ENCODE measurements at regions of chrX and their contacts with region 1.

Region 1: DNA sequence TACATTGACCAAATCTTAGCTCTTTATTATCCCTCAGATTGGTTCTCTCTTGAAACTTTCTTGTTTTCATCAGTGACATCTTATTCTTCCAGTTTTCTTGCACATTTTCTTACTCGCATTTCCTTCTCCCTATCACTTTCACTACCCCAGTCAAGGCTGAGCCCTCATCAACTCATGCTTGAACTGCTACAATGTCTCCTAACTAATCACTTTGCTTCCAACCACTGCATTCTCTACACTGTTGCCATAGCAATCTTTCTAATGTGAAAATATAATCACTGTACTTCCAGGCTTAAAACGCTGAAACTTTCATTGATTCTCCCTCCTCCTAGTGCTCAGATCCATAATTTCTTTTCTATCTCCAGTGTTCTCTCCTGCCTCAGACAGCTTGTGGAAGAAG is 22.2 kb upstream of the LPAR4 start:
- DNase-seq: no peak
- ATAC-seq: no peak
- H3K4me3 ChIP-seq: no peak overlapping the region
- H3K27ac ChIP-seq: no peak overlapping the region
- H3K4me1 ChIP-seq: peaks cover 5% of the 10 kb centered on the region; the same call in 1 of the 2 replicates
- H3K27me3 ChIP-seq: no peaks in the 10 kb centered on the region
- CTCF ChIP-seq: no peak
- EP300 ChIP-seq: no peak
- POLR2A ChIP-seq: no peak
- RAD21 ChIP-seq: no peak

Region 2: DNA sequence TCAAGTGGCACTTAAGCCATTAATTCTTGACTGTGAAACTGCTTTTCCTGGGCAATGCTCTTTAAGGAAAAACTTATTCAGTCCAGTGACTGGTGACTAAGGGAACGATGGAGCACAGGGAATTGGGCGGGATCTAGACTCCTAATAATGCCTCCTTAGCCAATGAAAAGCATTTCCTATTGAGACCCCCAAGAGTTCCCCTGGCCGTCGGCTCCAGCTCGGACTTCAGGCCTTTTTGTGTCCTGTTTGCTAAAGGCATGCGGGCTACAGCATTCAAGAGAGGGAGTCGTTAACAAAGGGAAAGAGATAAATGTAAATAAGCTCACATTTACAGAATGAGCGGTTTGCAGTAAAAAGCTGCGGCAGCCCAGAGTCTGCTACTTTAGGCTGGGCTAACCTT is 22.2 kb after region 1 on chrX and contains the start of gene LPAR4:
- CTCF ChIA-PET with region 1: no interaction called
- POLR2A ChIA-PET with region 1: no interaction called
- in situ Hi-C with region 1: no loop called
- intact Hi-C with region 1: loop called (anchors 1 kb)
- DNase-seq: no peak
- ATAC-seq: no peak
- H3K4me3 ChIP-seq: no peak within 1 kb of the TSS
- H3K27ac ChIP-seq: no peak within 1 kb of the TSS
- H3K4me1 ChIP-seq: no peaks in the 10 kb centered on the region
- H3K27me3 ChIP-seq: no peaks in the 10 kb centered on the region
- CTCF ChIP-seq: no peak
- EP300 ChIP-seq: no peak
- POLR2A ChIP-seq: no peak
- RAD21 ChIP-seq: no peak
- total RNA-seq, gene LPAR4: not detected in 2 replicates

Region 3: DNA sequence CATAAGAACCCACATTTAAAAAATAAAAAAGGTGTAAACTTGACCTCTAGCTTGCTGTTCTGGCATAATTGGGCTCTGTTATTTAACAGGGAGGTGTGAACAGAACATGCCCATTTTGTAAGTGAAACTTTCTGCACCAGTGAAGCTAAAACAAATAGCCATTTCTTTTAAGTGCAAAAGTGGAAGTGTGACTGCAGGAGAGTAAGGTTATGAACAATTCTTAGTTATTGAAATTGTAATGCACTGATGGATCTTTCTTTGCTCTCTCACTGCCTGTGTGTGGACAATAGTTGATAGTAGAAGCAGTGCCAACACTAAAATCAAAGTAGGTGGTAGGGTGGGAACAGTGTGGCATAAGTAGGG is 232.5 kb after region 1 on chrX:
- CTCF ChIA-PET with region 1: no interaction called
- POLR2A ChIA-PET with region 1: no interaction called
- in situ Hi-C with region 1: no loop called
- intact Hi-C with region 1: no loop called
- DNase-seq: no peak
- ATAC-seq: no peak
- H3K4me3 ChIP-seq: no peak overlapping the region
- H3K27ac ChIP-seq: no peak overlapping the region
- H3K4me1 ChIP-seq: no peaks in the 10 kb centered on the region
- H3K27me3 ChIP-seq: no peaks in the 10 kb centered on the region
- CTCF ChIP-seq: no peak
- EP300 ChIP-seq: no peak
- POLR2A ChIP-seq: no peak
- RAD21 ChIP-seq: no peak

Measured in HepG2 (cell line).